Endothelial cell of umbilical vein (primary cell): ENCODE measurements at regions of chr17 and their contacts with region 1.

Region 1: DNA sequence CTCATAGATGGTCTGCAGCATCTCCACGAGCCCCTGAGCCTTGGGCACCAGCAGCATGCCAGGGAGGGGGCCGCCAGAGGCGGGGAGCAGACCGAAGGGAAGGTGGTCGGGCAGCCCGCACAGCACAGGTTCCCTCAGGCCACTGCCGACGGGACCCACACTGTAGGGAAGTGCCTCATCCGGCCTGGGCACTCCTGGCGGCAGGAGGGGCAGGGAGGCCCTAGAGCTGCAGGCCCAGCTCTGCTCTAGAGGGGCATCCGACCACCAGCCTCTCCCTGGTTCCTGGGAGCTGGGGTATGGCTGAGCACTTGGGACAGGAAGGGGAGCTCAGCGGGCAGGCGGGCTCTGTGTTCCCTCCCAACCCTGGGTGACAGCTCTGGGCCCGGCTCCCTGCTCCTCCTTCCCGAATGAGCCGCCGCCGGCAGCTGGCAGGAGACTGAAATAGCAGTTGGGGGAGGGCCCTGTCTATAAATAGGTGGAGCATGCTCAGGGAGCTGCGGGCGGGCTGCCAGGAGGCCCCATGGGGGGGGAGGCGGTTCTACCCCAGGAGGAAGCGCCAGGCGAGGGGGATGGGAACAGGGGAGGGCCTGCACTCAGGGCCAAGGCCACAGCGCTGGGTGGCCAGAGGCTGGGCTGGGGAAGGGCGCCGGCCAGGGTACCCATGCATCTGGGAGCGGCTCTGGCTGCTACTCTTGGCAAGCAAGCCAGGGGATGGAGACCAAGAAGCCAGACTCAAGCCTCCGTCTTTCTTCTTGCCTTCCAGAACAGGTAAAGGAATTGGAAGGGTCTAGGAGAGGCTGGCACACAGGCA is 12.4 kb downstream of the HDAC5 start:
- DNase-seq: peak; percentile 87
- H3K4me3 ChIP-seq: peak overlapping the region in 2 of 3 experiments; percentile 10 to 40
- H3K27ac ChIP-seq: no peak overlapping the region
- H3K4me1 ChIP-seq: peaks cover 14% of the 10 kb centered on the region
- H3K27me3 ChIP-seq: no peaks in the 10 kb centered on the region
- CTCF ChIP-seq: no peak
- POLR2A ChIP-seq: no peak

Region 2: DNA sequence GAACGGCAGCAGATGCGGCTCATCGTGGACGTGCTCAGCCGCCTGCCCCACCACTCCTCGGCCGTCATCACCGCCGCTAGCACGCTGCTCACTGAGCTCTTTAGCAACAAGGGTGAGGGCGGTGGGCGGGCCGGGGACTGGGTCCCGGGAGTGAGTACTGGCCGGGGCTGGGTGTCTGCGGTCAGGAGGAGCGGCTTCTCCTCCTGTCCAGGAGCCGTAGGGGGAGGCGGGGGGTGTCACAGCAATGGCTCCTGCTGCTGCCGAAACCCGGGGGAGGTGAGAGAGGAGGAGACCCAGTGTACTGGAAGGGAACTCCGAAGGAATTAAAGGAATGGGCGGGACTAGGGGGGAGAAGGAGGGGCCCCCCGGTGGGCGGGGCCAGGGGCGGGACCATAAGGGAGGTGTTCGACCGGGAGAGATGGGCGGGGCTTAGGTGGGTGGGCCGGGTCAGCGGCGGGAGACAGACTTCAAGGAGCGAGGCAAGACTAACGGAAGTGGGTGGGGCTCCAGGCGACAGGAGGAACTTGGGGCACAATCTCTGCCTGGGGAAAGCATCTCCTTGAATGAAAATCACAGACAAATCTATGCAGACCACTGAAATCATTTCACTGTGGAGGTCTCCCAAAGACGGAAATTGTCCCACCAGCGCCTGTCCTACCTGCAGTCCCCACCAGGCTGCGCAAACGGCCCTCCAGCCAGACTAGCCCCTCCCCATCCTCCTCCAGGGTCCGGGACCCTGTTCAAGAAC is 104.3 kb before region 1 on chr17:
- CTCF ChIA-PET with region 1: interaction called, 21 read pairs
- POLR2A ChIA-PET with region 1: no interaction called
- dilution Hi-C with region 1: no loop called
- intact Hi-C with region 1: loop called (anchors 10 kb)
- DNase-seq: peak; percentile 93
- H3K4me3 ChIP-seq: peak overlapping the region in 2 of 3 experiments; percentile 43 to 56
- H3K27ac ChIP-seq: no peak overlapping the region
- H3K4me1 ChIP-seq: peaks cover 36% of the 10 kb centered on the region
- H3K27me3 ChIP-seq: no peaks in the 10 kb centered on the region
- CTCF ChIP-seq: peak; percentile 57 to 76
- POLR2A ChIP-seq: no peak

Region 3: GRCh38 chr17:44061446-44061845 is 49.6 kb before region 1 on chr17:
- CTCF ChIA-PET with region 1: interaction called, 10 read pairs
- POLR2A ChIA-PET with region 1: interaction called, 7 read pairs
- dilution Hi-C with region 1: no loop called
- intact Hi-C with region 1: no loop called
- DNase-seq: no peak
- H3K4me3 ChIP-seq: no peak overlapping the region
- H3K27ac ChIP-seq: no peak overlapping the region
- H3K4me1 ChIP-seq: peaks cover 13% of the 10 kb centered on the region
- H3K27me3 ChIP-seq: no peaks in the 10 kb centered on the region
- CTCF ChIP-seq: no peak
- POLR2A ChIP-seq: no peak

Region 4: DNA sequence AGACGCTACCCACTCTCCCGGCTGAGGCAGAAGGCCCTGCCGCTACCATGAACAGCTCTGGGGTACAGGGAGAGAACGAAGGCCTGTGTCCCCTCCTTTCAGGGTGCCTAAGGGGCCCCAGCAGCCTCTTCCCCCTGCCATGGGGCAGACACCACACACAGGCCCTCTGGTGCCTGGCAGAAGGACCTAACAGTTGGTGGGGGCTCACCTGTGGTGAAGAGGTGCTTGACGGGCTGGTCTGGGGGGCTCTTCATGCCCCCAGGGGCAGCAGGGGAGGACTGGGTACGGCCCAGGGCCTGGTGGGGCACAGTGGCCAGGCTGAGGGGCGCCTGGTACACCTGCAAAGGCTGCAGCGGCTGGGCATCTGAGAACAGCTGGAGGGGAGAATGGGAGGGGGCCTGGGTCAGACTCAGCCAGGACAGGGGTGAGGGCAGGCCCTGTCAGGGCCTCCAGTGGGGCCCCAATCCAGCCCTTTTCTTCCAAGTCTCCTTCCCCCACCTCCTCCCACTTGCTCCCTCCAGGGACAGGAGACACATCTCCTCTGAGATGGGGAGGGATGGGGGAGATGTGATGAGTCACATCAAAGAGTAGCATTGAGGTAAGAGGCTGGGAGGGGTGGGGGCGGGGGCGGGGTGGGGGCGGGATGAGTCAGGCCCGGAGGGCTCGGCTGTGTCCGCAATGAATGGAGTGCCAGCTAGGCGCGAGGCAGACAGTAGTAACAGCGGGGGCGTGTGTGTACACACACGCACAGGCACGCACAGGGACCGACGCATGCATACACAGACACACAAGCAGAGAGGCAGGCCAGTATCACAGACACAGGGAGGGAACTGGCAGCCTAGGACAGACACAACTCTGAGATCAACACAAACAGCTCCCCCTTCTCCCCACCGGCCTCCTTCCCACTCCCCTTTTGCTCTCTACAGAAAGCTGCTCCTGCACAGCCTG is 24.4 kb before region 1 on chr17:
- CTCF ChIA-PET with region 1: interaction called, 31 read pairs
- POLR2A ChIA-PET with region 1: no interaction called
- dilution Hi-C with region 1: no loop called
- intact Hi-C with region 1: loop called (anchors 2 kb)
- DNase-seq: peak; percentile 50
- H3K4me3 ChIP-seq: no peak overlapping the region
- H3K27ac ChIP-seq: no peak overlapping the region
- H3K4me1 ChIP-seq: peaks cover 6% of the 10 kb centered on the region
- H3K27me3 ChIP-seq: no peaks in the 10 kb centered on the region
- CTCF ChIP-seq: no peak
- POLR2A ChIP-seq: no peak

Region 5: DNA sequence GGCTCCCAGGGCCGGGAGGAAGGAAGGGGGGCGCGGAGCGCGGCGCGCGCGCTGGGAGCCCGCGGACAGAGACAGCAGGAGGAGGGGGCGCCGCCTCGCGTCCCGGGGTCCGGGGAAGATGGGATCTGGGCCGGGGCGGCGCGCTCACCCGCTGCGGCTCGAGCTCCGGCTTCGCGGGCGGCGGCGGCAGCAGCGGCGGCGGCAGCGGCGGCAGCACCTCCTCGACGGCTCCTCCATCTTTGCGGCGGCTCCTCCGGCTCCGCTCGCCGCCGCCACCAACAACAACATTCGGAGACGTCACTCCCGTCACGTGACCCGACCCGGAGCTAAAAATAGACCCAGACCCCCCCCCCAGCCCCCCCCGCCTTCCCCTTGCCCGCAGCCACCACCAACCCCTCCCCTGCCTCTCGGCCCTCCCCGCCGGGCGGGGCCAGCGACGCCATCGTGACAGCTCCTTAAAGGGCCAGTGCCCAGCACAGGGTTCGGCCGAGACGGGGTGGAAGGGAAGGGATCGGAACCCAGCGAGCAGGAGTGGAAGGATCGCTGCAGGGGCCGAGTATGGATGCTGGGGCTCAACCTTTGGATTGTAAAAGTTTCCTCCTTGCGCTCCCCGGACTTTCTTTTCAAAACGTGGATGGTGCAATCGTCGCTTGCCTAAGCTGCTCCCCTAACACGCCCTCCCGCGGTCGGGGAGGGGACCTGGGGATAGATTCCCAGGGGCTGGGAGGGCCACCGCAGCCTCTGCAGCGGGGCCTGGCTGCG is 12.5 kb after region 1 on chr17 and contains the start of gene HDAC5:
- CTCF ChIA-PET with region 1: interaction called, 11 read pairs
- POLR2A ChIA-PET with region 1: interaction called, 8 read pairs
- dilution Hi-C with region 1: no loop called
- intact Hi-C with region 1: loop called (anchors 1 kb)
- DNase-seq: peak; percentile 95
- H3K4me3 ChIP-seq: peak within 1 kb of the TSS; percentile 58 to 80 (median 78)
- H3K27ac ChIP-seq: peak within 1 kb of the TSS; percentile 51
- H3K4me1 ChIP-seq: peaks cover 7% of the 10 kb centered on the region
- H3K27me3 ChIP-seq: peaks cover 2 to 7% of the 10 kb centered on the region in 2 experiments
- CTCF ChIP-seq: peak; percentile 51 to 63
- POLR2A ChIP-seq: no peak
- total RNA-seq, gene HDAC5: 40.2 and 40.4 TPM in 2 replicates

Region 6: GRCh38 chr17:44338702-44339101 is 227.7 kb after region 1 on chr17:
- CTCF ChIA-PET with region 1: no interaction called
- POLR2A ChIA-PET with region 1: no interaction called
- dilution Hi-C with region 1: no loop called
- intact Hi-C with region 1: no loop called
- DNase-seq: no peak
- H3K4me3 ChIP-seq: no peak overlapping the region
- H3K27ac ChIP-seq: no peak overlapping the region
- H3K4me1 ChIP-seq: no peaks in the 10 kb centered on the region
- H3K27me3 ChIP-seq: peaks cover 0 to 2% of the 10 kb centered on the region in 2 experiments
- CTCF ChIP-seq: no peak
- POLR2A ChIP-seq: no peak